AG04450 (cell line): ENCODE measurements at regions of chr14 and their contacts with region 1.

Region 1: GRCh38 chr14:23057757-23058653 is 685 bp upstream of the CDH24 start:
- DNase-seq: peak; percentile 45
- H3K4me3 ChIP-seq: peak overlapping the region; percentile 61
- H3K27ac ChIP-seq: peak overlapping the region; percentile 52
- H3K27me3 ChIP-seq: no peaks in the 10 kb centered on the region
- CTCF ChIP-seq: peak; percentile 96

Region 2: DNA sequence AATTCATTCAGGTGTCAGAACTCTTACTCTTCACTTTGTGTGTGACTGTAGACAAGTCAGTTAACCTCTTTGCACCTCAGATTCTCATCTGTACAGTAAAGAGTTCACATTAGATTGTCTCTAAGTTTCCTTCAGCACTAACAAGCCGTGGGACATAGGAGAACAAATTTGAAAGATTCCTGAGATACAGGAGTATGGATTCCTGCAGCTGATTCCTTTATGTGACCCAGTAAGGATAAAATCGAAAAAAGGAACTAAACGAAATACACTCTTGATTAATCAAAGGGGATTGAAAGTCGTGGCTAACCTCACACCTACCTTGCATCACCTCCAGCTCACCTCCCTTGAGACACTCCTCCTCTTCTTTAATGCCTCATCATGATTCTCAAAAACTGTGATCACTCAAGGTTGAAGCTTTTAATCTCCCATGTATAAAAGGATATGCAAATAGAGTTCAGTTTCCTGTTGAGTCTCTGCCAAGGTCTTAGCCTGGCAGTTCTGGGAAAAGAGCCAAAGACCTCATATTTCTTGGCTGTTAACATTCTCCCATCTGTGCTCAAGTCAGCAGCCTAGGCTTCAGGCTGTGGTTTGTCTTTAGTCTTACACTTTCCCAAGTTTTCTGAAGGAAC is 625.5 kb before region 1 on chr14:
- CTCF ChIA-PET with region 1: no interaction called
- POLR2A ChIA-PET with region 1: no interaction called
- DNase-seq: peak; percentile 74
- H3K4me3 ChIP-seq: no peak overlapping the region
- H3K27ac ChIP-seq: no peak overlapping the region
- H3K27me3 ChIP-seq: peaks cover 36% of the 10 kb centered on the region
- CTCF ChIP-seq: no peak

Region 3: GRCh38 chr14:22939684-22940083 is 118.3 kb before region 1 on chr14:
- CTCF ChIA-PET with region 1: no interaction called
- POLR2A ChIA-PET with region 1: no interaction called
- DNase-seq: peak; percentile 30
- H3K4me3 ChIP-seq: no peak overlapping the region
- H3K27ac ChIP-seq: peak overlapping the region; percentile 31
- H3K27me3 ChIP-seq: no peaks in the 10 kb centered on the region
- CTCF ChIP-seq: no peak

Region 4: GRCh38 chr14:23006544-23007419 is 51.2 kb before region 1 on chr14:
- CTCF ChIA-PET with region 1: interaction called, 18 read pairs
- POLR2A ChIA-PET with region 1: interaction called, 5 read pairs
- DNase-seq: peak; percentile 95
- H3K4me3 ChIP-seq: peak overlapping the region; percentile 80
- H3K27ac ChIP-seq: peak overlapping the region; percentile 92
- H3K27me3 ChIP-seq: no peaks in the 10 kb centered on the region
- CTCF ChIP-seq: peak; percentile 40

Region 5: GRCh38 chr14:23095196-23096108 is 37.4 kb after region 1 on chr14 and contains the start of gene C14orf119:
- CTCF ChIA-PET with region 1: interaction called, 6 read pairs
- POLR2A ChIA-PET with region 1: interaction called, 17 read pairs
- DNase-seq: peak; percentile 99
- H3K4me3 ChIP-seq: peak within 1 kb of the TSS; percentile 95
- H3K27ac ChIP-seq: peak within 1 kb of the TSS; percentile 99
- H3K27me3 ChIP-seq: no peaks in the 10 kb centered on the region
- CTCF ChIP-seq: no peak
- polyA plus RNA-seq, gene C14orf119: 119 and 128 TPM in 2 replicates

Region 6: DNA sequence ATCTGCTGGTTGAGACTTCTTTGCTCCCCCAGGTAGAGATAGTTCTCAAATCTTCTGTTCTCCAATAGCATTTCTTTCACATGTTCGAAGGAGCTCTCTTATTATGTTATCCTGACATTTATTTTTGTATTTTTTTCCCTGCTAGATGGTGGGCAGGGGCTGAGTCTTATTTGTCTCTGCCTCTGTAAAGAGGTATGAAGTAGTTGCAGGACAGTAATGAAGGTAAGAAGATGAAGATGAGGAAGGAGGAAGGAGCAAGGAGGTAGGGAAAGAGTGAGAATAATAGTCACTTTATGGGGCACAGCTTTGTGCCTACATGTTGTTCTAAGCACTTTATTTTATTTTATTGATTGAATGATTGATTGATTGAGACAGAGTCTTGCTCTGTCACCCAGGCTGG is 51.8 kb after region 1 on chr14:
- CTCF ChIA-PET with region 1: interaction called, 17 read pairs
- POLR2A ChIA-PET with region 1: interaction called, 10 read pairs
- DNase-seq: no peak
- H3K4me3 ChIP-seq: no peak overlapping the region
- H3K27ac ChIP-seq: no peak overlapping the region
- H3K27me3 ChIP-seq: no peaks in the 10 kb centered on the region
- CTCF ChIP-seq: no peak

Region 7: DNA sequence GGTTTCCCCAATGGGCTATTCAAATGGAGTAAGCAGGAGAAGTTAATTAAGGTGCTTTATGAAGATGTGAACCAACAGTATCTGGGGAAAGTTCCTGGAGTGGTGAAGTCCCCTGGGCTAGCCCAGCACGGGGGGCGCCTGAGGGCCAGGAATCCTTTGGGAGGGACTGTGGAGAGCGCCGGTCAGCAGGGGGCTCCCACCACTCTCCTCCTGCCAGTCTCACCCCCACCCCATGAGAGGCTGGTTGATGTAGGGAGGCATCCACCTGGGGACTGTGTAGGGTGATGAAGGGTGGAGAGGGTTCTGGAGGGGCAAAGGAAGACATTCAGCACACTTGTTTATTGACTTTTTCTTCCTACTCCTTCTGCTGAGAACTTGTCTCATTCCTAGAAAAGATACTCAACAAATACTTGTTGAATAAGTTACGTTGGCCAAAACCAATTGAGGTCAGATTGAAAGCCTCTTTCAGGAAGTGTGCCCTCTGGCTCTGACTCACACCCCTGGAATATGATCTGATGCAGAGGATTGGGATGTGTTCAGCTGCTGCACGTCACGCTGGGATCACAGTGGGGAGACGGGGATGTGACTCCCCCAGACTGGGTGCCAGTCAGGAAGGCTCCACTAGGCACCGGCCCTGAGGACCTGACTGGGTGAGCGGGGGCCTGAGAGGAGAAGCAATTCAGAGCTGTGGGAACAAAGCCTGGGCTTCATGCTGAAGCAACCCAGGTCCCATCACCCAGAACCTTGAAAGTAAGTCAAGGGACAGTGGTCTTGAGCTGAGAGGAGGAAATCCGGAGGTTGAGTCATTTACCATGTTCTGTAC is 56.9 kb after region 1 on chr14:
- CTCF ChIA-PET with region 1: interaction called, 17 read pairs
- POLR2A ChIA-PET with region 1: interaction called, 3 read pairs
- DNase-seq: peak; percentile 89
- H3K4me3 ChIP-seq: peak overlapping the region; percentile 17; the same call in 1 of the 2 replicates
- H3K27ac ChIP-seq: peak overlapping the region; percentile 91
- H3K27me3 ChIP-seq: no peaks in the 10 kb centered on the region
- CTCF ChIP-seq: peak; percentile 16